Heart left ventricle (tissue), 16 donors: ENCODE measurements at regions of chr9 and their contacts with region 1.

Region 1: GRCh38 chr9:4489919-4490704 is at the start of gene SLC1A1:
- DNase-seq: peak; percentile 57 to 78 (median 62)
- ATAC-seq: peak; percentile 70 to 90 (median 89)
- H3K4me3 ChIP-seq: peak within 1 kb of the TSS; percentile 71 to 92 (median 77)
- H3K27ac ChIP-seq: peak within 1 kb of the TSS in 11 of 12 donors; percentile 52 to 82 (median 63)
- H3K4me1 ChIP-seq: peaks cover 0 to 21% (median 9%) of the 10 kb centered on the region in 12 donors
- H3K27me3 ChIP-seq: peaks cover 0 to 24% (median 0%) of the 10 kb centered on the region in 9 donors
- CTCF ChIP-seq: no peak
- POLR2A ChIP-seq: peak in 1 of 2 donors; percentile 28
- total RNA-seq, gene SLC1A1: 1.1 to 4.6 (median 2.1) TPM

Region 2: DNA sequence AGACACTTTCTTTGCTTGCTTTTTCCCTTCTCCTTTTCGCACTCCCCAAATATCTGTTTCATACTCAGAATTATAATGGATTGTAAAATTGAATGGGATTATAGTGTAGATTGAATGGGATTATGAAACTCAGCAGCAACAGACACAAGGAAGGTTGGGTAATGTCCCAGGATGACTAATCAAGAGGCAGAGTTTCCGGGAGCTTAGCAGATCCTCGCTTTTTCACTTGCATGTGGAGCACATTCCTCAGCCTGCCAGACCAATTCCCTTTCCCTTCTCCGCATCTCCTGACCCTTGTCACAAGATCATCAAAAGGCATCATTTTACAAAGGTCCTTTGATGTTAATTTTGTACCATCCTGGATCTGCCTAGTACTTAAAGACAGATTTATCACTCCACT is 54.9 kb before region 1 on chr9:
- intact Hi-C with region 1: loop called in 1 of 10 experiments (anchors 10 kb)
- DNase-seq: no peak
- ATAC-seq: no peak
- H3K4me3 ChIP-seq: no peak overlapping the region
- H3K27ac ChIP-seq: no peak overlapping the region
- H3K4me1 ChIP-seq: peaks cover 0 to 13% (median 0%) of the 10 kb centered on the region in 12 donors
- H3K27me3 ChIP-seq: no peaks in the 10 kb centered on the region
- CTCF ChIP-seq: no peak
- POLR2A ChIP-seq: no peak

Region 3: GRCh38 chr9:4548811-4549725 is 59.0 kb after region 1 on chr9:
- intact Hi-C with region 1: loop called in 5 of 10 experiments (anchors 5 to 10 kb)
- DNase-seq: peak in 3 of 5 donors; percentile 32 to 68 (median 44)
- ATAC-seq: peak; percentile 19 to 49 (median 40)
- H3K4me3 ChIP-seq: no peak overlapping the region
- H3K27ac ChIP-seq: peak overlapping the region in 9 of 12 donors; percentile 17 to 64 (median 36)
- H3K4me1 ChIP-seq: peaks cover 0 to 57% (median 16%) of the 10 kb centered on the region in 12 donors
- H3K27me3 ChIP-seq: no peaks in the 10 kb centered on the region
- CTCF ChIP-seq: peak in 10 of 12 donors; percentile 18 to 57 (median 34)
- POLR2A ChIP-seq: no peak

Region 4: DNA sequence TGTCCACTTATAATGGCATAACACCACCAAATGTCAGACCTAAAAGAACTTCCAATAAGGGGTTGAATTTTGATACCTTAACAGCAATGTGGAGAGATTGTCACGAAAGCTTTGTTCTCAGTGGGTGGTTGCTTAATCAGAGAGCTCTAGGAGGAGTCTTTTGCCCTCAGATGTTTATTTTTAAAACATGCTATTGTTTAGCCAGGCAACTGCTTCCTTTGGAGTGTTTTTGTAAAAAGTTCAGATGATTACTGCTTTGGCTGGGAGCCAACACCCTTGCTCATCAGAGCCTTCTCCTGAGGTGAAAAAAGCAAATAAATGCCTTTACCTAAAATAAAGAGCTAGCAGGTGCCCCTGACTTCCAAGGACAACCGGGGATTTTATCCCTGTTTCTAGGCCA is 65.1 kb after region 1 on chr9:
- intact Hi-C with region 1: loop called in 3 of 10 experiments (anchors 5 to 10 kb)
- DNase-seq: peak in 4 of 5 donors; percentile 32 to 53 (median 42)
- ATAC-seq: peak in 3 of 4 donors; percentile 46 to 74 (median 52)
- H3K4me3 ChIP-seq: no peak overlapping the region
- H3K27ac ChIP-seq: peak overlapping the region in 9 of 12 donors; percentile 53 to 82 (median 69)
- H3K4me1 ChIP-seq: peaks cover 0 to 51% (median 17%) of the 10 kb centered on the region in 12 donors
- H3K27me3 ChIP-seq: no peaks in the 10 kb centered on the region
- CTCF ChIP-seq: no peak
- POLR2A ChIP-seq: no peak

Region 5: GRCh38 chr9:4604678-4605095 is 114.6 kb after region 1 on chr9:
- intact Hi-C with region 1: loop called in 1 of 10 experiments (anchors 5 kb)
- DNase-seq: peak in 4 of 5 donors; percentile 30 to 61 (median 52)
- ATAC-seq: peak in 3 of 4 donors; percentile 65 to 85 (median 74)
- H3K4me3 ChIP-seq: no peak overlapping the region
- H3K27ac ChIP-seq: no peak overlapping the region
- H3K4me1 ChIP-seq: peaks cover 0 to 4% (median 0%) of the 10 kb centered on the region in 12 donors
- H3K27me3 ChIP-seq: no peaks in the 10 kb centered on the region
- CTCF ChIP-seq: peak; percentile 62 to 86 (median 76)
- POLR2A ChIP-seq: no peak

Region 6: GRCh38 chr9:4657426-4658159 is 167.5 kb after region 1 on chr9:
- intact Hi-C with region 1: no loop called
- DNase-seq: no peak
- ATAC-seq: no peak
- H3K4me3 ChIP-seq: no peak overlapping the region
- H3K27ac ChIP-seq: no peak overlapping the region
- H3K4me1 ChIP-seq: peaks cover 0 to 10% (median 7%) of the 10 kb centered on the region in 12 donors
- H3K27me3 ChIP-seq: no peaks in the 10 kb centered on the region
- CTCF ChIP-seq: no peak
- POLR2A ChIP-seq: no peak